Pancreas (tissue), 10 donors: ENCODE measurements at regions of chr11 and their contacts with region 1.

Region 1: DNA sequence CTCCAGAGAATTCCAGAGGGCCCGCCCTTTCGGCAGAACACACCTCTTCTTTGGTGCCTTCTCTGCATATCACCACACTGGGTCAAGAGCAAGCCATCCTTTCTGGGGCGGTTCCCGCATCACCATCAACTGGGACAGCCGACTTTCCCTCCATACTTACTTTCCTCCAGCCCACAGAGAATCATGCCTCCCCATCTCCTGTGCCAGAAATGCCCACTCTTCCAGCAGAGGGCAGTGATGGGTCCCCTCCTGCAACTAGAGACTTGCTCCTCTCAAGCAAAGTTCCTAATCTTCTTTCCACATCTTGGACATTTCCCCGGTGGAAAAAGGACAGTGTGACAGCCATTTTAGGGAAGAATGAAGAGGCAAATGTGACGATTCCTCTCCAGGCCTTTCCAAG is 157.7 kb downstream of the C11orf91 start:
- DNase-seq: peak in 4 of 6 donors; percentile 32 to 75 (median 55)
- ATAC-seq: peak; percentile 69 to 92 (median 80)
- H3K4me3 ChIP-seq: no peak overlapping the region
- H3K27ac ChIP-seq: no peak overlapping the region
- H3K4me1 ChIP-seq: no peaks in the 10 kb centered on the region
- H3K27me3 ChIP-seq: no peaks in the 10 kb centered on the region
- CTCF ChIP-seq: peak; percentile 36 to 57 (median 53)

Region 2: DNA sequence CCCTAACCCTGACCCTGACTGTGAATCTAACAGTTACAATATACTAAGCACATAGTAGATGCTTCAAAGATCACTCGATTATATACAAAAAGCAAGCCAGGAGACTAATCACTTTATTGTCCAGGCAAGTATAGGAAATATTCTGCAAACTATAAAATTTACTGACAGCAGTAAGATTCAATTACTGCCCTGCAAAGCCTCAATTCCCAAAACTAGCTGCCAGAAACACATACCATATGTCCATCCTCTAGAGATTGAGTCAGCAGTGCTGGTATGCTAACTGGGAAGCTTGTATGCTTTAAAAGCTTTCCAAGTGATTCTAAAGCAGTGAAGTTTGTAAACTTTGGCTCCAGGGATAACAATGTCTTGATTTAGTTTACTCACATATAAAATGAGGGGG is 407.7 kb before region 1 on chr11:
- intact Hi-C with region 1: no loop called
- DNase-seq: no peak
- ATAC-seq: no peak
- H3K4me3 ChIP-seq: no peak overlapping the region
- H3K27ac ChIP-seq: no peak overlapping the region
- H3K4me1 ChIP-seq: no peaks in the 10 kb centered on the region
- H3K27me3 ChIP-seq: no peaks in the 10 kb centered on the region
- CTCF ChIP-seq: no peak

Region 3: DNA sequence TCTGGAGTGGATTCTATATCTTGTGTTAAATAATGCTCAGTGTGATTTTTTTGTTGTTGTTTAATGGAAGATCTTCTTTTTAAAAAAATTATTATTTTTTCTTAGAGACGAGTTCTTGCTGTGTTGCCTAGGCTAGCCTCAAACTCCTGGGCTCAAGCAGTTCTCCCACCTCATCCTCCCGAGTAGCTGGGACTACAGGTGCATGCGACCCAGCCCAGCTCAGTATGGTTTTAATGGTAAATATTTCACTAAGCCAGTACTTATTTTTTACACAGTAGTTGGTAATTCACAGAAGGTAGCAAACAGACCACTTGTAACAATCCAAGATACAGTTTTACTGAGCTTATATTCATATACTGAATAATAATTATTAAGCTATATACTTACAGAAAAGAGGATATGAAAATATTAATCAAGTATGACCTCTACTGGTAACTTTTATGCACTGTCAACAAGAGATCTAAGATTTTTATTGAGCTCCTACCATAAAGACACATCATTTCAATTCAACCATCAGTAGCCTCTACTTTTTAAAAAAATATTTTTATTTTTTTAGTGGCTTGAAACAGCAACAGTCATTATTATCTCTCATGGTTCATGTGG is 199.4 kb after region 1 on chr11:
- intact Hi-C with region 1: loop called in 1 of 3 experiments (anchors 10 kb)
- DNase-seq: no peak
- ATAC-seq: peak in 3 of 4 donors; percentile 75 to 81 (median 80)
- H3K4me3 ChIP-seq: no peak overlapping the region
- H3K27ac ChIP-seq: no peak overlapping the region
- H3K4me1 ChIP-seq: peaks cover 0 to 11% (median 0%) of the 10 kb centered on the region in 3 donors
- H3K27me3 ChIP-seq: no peaks in the 10 kb centered on the region
- CTCF ChIP-seq: peak in 3 of 4 donors; percentile 30 to 48 (median 30)